Activated T-helper 1 cell treated with anti-CD3 and anti-CD28 coated beads, Interleukin-12 subunit alpha, Interleukin-12 subunit beta, Interleukin-2, Interleukin-4 antibody, amounts not matched to agents 30 ng/mL and 10 ng/mL and 1 ng/mL, durations not matched to agents 14 hours and 24 hours and 36 hours (primary cell): ENCODE measurements at regions of chr3 and their contacts with region 1.

Region 1: DNA sequence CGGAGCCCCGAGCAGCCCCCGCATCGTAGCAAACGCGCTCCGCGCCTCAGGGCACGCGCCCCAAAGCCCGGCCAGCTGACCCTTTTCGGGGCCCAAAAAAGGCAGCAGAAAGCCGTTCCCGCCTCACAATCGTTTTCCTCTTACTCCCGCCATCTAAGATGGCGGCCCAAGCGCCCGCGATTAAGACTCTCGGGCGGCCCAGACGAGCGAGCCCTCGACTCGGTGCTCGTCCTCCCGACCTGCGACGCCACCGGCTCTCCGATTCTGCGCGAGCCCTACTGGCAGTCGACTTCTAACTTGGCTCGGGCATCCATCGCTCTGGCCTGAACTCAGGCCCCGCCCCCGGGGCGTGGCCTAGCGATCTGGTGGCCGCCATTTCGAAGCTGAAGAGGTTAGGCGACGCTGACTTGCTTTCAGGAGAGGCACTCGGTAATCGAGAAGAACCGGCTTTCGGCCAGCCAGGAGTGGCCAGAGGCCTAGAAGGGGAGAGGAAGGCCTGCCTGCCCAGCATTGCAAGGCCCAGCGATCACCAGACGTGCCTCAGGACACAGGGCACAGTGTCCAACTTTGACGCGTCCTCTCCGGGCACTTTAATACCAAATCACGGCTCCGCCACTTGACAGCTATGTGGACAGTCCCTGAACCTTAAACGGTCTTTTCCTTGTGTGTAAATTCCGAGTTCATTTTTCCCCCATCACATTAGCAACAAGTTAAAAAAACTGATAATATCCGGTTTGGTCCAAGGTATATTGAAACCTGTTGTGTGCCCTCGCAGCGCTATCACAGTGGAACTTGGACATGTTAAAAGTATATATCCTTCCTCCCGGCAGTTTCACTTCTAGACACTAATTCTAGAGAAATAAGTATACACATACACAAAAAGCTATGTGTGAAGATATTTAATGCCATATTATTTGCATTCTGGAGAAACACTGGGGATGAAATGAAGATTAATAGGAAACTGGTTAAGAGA is at the start of gene RAF1:
- DNase-seq: peak; percentile 97
- H3K4me3 Mint-ChIP-seq: peak within 1 kb of the TSS; percentile 86
- H3K27ac Mint-ChIP-seq: peak within 1 kb of the TSS; percentile 99
- H3K4me1 Mint-ChIP-seq: peaks cover 30% of the 10 kb centered on the region
- H3K27me3 Mint-ChIP-seq: no peaks in the 10 kb centered on the region
- total RNA-seq, gene RAF1: 91.0 and 91.6 TPM in 2 replicates

Region 2: GRCh38 chr3:11803977-11804892 is 860.0 kb before region 1 on chr3:
- intact Hi-C with region 1: no loop called
- DNase-seq: peak; percentile 16
- H3K4me3 Mint-ChIP-seq: no peak overlapping the region
- H3K27ac Mint-ChIP-seq: no peak overlapping the region
- H3K4me1 Mint-ChIP-seq: peaks cover 10% of the 10 kb centered on the region
- H3K27me3 Mint-ChIP-seq: no peaks in the 10 kb centered on the region

Region 3: GRCh38 chr3:11846281-11847034 is 817.8 kb before region 1 on chr3 and contains the start of gene TAMM41:
- intact Hi-C with region 1: loop called (anchors 2 kb)
- DNase-seq: peak; percentile 86
- H3K4me3 Mint-ChIP-seq: peak within 1 kb of the TSS; percentile 96
- H3K27ac Mint-ChIP-seq: peak within 1 kb of the TSS; percentile 93
- H3K4me1 Mint-ChIP-seq: peaks cover 26% of the 10 kb centered on the region
- H3K27me3 Mint-ChIP-seq: no peaks in the 10 kb centered on the region
- total RNA-seq, gene TAMM41: 35.2 and 38.0 TPM in 2 replicates

Region 4: DNA sequence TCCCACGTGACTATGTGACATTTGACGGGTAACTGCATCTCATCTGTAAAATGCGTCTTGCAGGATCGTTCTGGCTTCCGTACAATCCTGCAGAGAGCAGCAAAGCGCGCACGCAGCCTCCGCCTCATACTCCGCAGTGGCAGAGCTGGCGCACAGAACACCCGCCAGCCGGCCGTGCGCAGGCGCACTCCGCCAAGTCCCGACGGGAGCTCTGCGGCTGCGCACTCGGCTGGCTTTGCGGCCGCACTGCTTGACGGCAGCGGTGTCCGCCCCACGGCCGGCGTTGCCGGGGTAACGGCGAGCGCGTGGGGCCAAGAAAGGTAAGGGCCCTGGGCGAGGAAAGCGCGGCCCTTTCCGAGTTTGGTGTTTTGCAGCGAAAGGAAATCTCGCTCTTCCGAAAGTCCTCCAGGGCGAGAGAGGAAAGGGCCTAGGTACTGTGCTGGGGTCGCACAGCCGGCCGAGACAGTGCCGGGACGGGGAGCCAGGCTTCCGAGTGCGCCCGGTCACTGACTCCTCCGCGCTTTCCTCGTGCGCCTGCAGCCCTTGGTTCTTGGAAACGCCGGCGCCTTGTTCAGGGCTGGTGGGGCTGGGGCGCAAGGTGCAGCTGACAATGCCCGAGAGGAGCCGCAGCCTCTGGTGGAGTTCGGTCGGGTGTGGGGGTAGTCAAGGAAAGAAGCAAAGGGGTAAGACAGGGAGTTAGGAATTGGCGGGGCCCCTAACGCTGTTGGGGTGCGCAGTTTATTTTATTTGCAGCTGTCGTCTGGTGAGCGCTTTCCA is 179.8 kb before region 1 on chr3 and contains the start of gene TSEN2:
- intact Hi-C with region 1: loop called (anchors 1 kb)
- DNase-seq: peak; percentile 97
- H3K4me3 Mint-ChIP-seq: peak within 1 kb of the TSS; percentile 100
- H3K27ac Mint-ChIP-seq: peak within 1 kb of the TSS; percentile 98
- H3K4me1 Mint-ChIP-seq: peaks cover 40% of the 10 kb centered on the region
- H3K27me3 Mint-ChIP-seq: no peaks in the 10 kb centered on the region
- total RNA-seq, gene TSEN2: 33.4 and 33.5 TPM in 2 replicates

Region 5: GRCh38 chr3:12629560-12629959 is 34.7 kb before region 1 on chr3:
- intact Hi-C with region 1: loop called (anchors 5 kb)
- DNase-seq: no peak
- H3K4me3 Mint-ChIP-seq: no peak overlapping the region
- H3K27ac Mint-ChIP-seq: no peak overlapping the region
- H3K4me1 Mint-ChIP-seq: peaks cover 30% of the 10 kb centered on the region
- H3K27me3 Mint-ChIP-seq: no peaks in the 10 kb centered on the region

Region 6: DNA sequence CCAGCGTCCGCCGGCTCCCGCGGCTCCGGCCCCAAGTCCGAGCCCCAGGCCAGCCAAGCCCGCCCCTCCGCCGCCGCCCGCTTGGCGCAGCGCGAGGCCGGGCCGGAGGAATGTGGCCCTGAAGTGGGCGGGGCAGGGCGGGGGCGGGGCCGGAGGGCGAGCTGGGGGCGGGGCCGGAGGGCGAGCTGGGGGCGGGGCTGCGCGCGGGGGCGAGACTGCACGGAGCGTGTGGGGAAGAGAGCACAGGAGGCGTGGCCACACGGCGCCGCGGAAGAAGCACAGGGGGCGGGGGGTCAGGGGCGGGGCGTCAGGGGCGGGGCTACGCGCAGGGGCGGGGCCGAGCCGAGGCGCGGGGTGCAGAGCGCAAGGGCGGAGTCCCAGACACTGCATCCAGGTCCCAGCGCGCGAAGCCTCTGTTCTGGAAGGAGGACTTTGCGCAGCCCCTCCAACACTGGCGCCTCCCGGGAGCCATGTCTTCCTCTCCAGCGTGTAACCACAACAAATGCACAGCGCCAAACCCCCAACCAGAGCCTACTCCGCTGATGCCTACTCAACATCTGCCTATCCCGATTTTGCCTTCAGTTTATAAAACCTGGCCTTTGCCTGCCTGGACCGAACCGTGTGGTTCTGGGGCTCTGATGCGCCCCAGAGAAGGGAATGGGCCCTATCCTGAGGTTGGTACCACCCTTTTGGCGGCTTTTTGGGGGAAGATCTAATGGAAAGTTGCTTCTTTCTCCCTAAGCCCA is 303.6 kb after region 1 on chr3:
- intact Hi-C with region 1: loop called (anchors 5 kb)
- DNase-seq: peak; percentile 83
- H3K4me3 Mint-ChIP-seq: peak overlapping the region; percentile 64
- H3K27ac Mint-ChIP-seq: peak overlapping the region; percentile 4
- H3K4me1 Mint-ChIP-seq: peaks cover 51% of the 10 kb centered on the region
- H3K27me3 Mint-ChIP-seq: no peaks in the 10 kb centered on the region

Region 7: DNA sequence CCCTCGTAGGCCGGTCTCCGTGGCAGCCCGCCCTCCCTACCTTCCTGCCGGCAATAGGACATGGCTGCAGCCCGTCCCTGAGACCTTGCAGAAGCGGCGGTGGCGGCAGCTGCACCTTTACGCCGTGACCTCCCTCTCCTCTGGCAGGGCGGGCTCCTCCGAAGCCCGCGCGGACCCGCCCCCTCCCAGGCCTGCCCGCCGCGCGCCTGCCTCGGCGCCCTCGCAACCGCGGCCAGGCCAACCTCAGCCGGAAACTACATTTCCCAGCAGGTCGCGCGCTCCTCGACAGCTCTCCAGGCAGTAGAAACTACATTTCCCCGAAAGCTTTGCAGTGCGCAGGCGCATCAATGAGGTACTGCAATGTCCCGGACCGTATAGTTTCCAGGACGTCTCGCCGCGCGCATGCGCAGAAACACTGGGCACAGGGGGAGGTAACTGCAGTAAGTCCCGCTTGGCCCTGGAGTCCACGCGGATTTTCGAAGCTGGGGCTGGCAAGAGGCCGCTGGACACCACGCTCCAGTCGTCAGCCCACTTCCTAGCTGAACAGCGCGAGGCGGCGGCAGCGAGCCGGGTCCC is 1460.5 kb after region 1 on chr3 and contains the starts of genes CHCHD4 and TMEM43:
- intact Hi-C with region 1: loop called (anchors 10 kb)
- DNase-seq: peak; percentile 98
- H3K4me3 Mint-ChIP-seq: peak within 1 kb of the TSS; percentile 93
- H3K27ac Mint-ChIP-seq: peak within 1 kb of the TSS; percentile 96
- H3K4me1 Mint-ChIP-seq: peaks cover 67% of the 10 kb centered on the region
- H3K27me3 Mint-ChIP-seq: no peaks in the 10 kb centered on the region
- total RNA-seq, gene CHCHD4: 27.8 and 29.4 TPM in 2 replicates
- total RNA-seq, gene TMEM43: 40.4 and 41.3 TPM in 2 replicates